ENCODE measurements at regions of chr3 and their contacts with region 1.

Region 1: DNA sequence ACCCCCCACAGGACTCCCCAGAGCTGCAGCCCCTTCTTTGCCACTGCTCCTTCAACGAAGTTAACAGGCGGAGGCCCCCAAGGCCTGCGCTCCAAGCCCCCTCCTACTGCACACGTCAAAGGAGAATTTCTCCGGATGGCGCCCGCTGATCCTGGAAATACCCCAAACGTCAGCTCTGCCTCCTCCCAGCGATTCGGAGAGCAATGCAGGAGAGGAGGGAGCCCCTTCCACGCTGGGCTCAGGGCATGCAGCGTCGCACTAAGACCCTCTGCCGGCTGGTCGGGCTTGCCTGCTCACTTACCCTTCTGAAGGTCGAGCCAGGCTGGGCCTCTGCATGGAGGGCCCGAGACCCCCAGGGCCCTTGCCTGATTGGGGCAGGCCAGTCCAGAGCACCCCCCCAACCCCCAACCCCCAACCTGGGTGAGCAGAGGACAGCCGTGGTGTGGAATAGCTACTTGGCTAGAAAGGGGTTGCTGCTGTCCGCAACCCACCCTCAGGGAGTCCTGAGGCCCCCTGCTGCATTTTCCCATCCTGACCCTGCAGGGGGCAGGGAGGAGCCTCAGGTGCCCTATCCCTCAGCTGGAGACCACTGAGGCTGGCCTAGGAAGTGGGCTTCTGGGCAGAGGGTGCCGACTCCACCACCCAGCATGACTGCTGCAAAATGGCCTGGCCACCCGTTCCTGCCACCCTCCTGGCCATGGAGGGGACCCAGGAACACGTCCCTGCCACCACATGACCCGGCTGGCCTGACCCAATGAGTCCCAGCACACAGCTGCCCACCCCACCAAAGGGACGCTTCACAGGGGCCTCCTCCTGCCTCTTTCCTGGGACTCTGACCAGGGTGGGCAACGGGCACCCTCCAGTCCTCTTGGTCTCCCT is 976 bp downstream of the ATP2B2 start:
- DNase-seq: no peak
- ATAC-seq: no peak
- H3K4me3 Mint-ChIP-seq: peak overlapping the region; percentile 23
- H3K27ac Mint-ChIP-seq: no peak overlapping the region
- H3K4me1 Mint-ChIP-seq: peaks cover 5% of the 10 kb centered on the region
- H3K27me3 Mint-ChIP-seq: peaks cover 12% of the 10 kb centered on the region

Region 2: DNA sequence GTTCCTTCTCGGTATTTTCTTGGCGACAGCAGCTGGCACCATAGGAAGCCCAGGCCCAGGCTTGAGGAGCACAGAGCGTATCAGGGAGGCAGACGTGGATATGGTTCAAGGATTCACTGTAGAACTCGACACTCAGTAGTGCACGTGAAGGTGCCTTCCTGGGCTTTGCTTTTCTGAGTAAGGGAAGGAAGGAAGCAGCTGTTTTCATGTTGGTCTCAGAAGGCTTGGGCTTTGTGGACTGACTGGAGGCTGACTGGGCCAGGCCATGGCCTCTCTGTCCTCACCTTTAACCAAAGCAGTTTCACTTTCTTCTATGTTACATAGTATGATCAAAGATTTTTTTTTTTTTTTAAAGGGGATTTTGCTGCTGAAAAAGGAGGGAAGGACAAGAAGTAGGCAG is 204.7 kb before region 1 on chr3:
- CTCF ChIA-PET with region 1: no interaction called
- POLR2A ChIA-PET with region 1: no interaction called
- intact Hi-C with region 1: no loop called
- DNase-seq: no peak
- ATAC-seq: peak; percentile 71
- H3K4me3 Mint-ChIP-seq: no peak overlapping the region
- H3K27ac Mint-ChIP-seq: peak overlapping the region; percentile 83
- H3K4me1 Mint-ChIP-seq: peaks cover 12% of the 10 kb centered on the region
- H3K27me3 Mint-ChIP-seq: no peaks in the 10 kb centered on the region

Region 3: GRCh38 chr3:10635446-10636076 is 131.2 kb after region 1 on chr3:
- CTCF ChIA-PET with region 1: no interaction called
- POLR2A ChIA-PET with region 1: no interaction called
- intact Hi-C with region 1: loop called in 1 of 2 experiments (anchors 5 kb)
- DNase-seq: no peak
- ATAC-seq: no peak
- H3K4me3 Mint-ChIP-seq: no peak overlapping the region
- H3K27ac Mint-ChIP-seq: no peak overlapping the region
- H3K4me1 Mint-ChIP-seq: no peaks in the 10 kb centered on the region
- H3K27me3 Mint-ChIP-seq: peaks cover 5% of the 10 kb centered on the region

Measured in activated CD4-positive, alpha-beta T cell treated with anti-CD3 and anti-CD28 coated beads for 36 hours (primary cell).